Activated T-helper 1 cell treated with anti-CD3 and anti-CD28 coated beads, Interleukin-12 subunit alpha, Interleukin-12 subunit beta, Interleukin-2, Interleukin-4 antibody, amounts not matched to agents 30 ng/mL and 10 ng/mL and 1 ng/mL, durations not matched to agents 14 hours and 24 hours and 36 hours (primary cell): ENCODE measurements at regions of chr19 and their contacts with region 1.

Region 1: GRCh38 chr19:57746580-57747471 is at the start of gene ZNF776:
- DNase-seq: peak; percentile 79
- H3K4me3 Mint-ChIP-seq: peak within 1 kb of the TSS; percentile 90
- H3K27ac Mint-ChIP-seq: peak within 1 kb of the TSS; percentile 93
- H3K4me1 Mint-ChIP-seq: peaks cover 12% of the 10 kb centered on the region
- H3K27me3 Mint-ChIP-seq: peaks cover 2% of the 10 kb centered on the region
- total RNA-seq, gene ZNF776: 6.8 and 6.9 TPM in 2 replicates

Region 2: DNA sequence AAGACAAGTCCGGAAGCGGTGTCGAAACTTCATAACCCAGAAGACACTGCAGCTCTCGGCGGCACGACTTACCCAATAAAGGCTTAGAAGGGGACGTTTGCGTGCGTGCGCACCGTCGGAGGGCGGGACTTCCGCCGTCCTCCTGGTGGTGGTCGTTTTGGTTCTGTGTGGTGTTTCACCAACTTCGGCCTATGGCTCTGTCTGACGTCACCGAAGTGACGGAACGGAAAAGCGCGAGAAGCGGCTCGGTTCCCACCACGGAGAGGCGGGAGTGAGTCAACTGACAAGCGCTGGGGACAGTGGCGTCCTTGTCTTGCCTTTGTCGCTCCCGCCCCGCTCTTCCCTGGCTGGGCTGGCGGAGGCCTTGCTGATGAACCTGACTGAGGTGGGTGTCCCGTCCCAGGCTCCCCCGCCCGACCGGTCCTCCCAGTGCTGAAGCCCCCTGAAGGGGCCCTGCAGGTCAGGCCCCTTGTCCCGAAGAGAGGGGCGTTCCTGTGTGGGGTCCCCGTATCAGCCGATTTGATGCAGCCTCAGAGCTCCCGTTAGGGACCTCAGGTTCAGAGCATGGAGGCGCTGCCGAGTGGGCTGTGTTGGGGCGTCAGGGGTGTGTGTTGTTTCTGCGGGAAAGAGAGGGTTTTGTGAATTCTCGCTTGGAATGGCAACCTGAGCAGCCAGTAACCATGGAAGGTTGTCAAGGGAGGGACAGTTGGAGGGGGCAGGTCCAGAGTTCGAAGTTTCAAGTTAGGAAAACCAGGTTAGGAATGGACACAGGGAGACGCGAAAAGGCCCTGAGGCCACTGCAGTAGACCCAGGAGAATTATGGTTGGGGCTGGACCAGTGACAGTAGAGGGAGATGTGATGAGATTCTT is 356.9 kb before region 1 on chr19 and contains the start of gene ZNF548:
- intact Hi-C with region 1: no loop called
- DNase-seq: peak; percentile 92
- H3K4me3 Mint-ChIP-seq: peak within 1 kb of the TSS; percentile 94
- H3K27ac Mint-ChIP-seq: peak within 1 kb of the TSS; percentile 94
- H3K4me1 Mint-ChIP-seq: peaks cover 30% of the 10 kb centered on the region
- H3K27me3 Mint-ChIP-seq: no peaks in the 10 kb centered on the region
- total RNA-seq, gene ZNF548: 11.3 and 12.1 TPM in 2 replicates

Region 3: DNA sequence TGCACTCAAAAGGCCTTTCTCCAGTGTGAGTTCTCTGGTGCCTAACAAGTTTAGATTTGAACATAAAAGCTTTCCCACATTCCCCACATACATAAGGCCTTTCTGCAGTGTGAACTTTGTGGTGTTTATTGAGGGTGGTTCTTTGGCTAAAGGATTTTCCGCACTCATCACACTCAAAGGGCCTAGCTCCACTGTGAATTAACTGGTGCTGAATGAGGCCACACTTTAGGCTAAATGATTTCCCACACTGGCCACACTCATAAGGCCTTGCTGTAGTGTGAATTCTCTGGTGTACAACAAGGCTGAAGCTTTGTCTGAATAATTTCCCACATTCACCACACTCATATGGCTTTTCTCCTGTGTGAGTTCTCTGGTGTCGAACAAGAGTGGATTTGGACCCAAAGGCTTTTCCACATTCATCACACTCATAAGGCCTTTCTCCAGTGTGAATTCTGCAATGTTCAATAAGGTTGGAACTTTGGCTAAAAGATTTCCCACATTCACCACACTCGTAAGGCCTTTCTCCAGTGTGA is 174.3 kb before region 1 on chr19:
- intact Hi-C with region 1: no loop called
- DNase-seq: no peak
- H3K4me3 Mint-ChIP-seq: no peak overlapping the region
- H3K27ac Mint-ChIP-seq: no peak overlapping the region
- H3K4me1 Mint-ChIP-seq: peaks cover 3% of the 10 kb centered on the region
- H3K27me3 Mint-ChIP-seq: no peaks in the 10 kb centered on the region

Region 4: GRCh38 chr19:57587529-57587928 is 159.3 kb before region 1 on chr19:
- intact Hi-C with region 1: no loop called
- DNase-seq: no peak
- H3K4me3 Mint-ChIP-seq: no peak overlapping the region
- H3K27ac Mint-ChIP-seq: no peak overlapping the region
- H3K4me1 Mint-ChIP-seq: peaks cover 16% of the 10 kb centered on the region
- H3K27me3 Mint-ChIP-seq: no peaks in the 10 kb centered on the region

Region 5: GRCh38 chr19:57613941-57614743 is 132.7 kb before region 1 on chr19 and contains the start of gene ZNF134:
- intact Hi-C with region 1: loop called (anchors 1 kb)
- DNase-seq: peak; percentile 84
- H3K4me3 Mint-ChIP-seq: peak within 1 kb of the TSS; percentile 90
- H3K27ac Mint-ChIP-seq: peak within 1 kb of the TSS; percentile 78
- H3K4me1 Mint-ChIP-seq: peaks cover 11% of the 10 kb centered on the region
- H3K27me3 Mint-ChIP-seq: no peaks in the 10 kb centered on the region
- total RNA-seq, gene ZNF134: 8.4 and 9.4 TPM in 2 replicates

Region 6: GRCh38 chr19:57719901-57720519 is 26.8 kb before region 1 on chr19:
- intact Hi-C with region 1: no loop called
- DNase-seq: no peak
- H3K4me3 Mint-ChIP-seq: no peak overlapping the region
- H3K27ac Mint-ChIP-seq: no peak overlapping the region
- H3K4me1 Mint-ChIP-seq: no peaks in the 10 kb centered on the region
- H3K27me3 Mint-ChIP-seq: no peaks in the 10 kb centered on the region

Region 7: DNA sequence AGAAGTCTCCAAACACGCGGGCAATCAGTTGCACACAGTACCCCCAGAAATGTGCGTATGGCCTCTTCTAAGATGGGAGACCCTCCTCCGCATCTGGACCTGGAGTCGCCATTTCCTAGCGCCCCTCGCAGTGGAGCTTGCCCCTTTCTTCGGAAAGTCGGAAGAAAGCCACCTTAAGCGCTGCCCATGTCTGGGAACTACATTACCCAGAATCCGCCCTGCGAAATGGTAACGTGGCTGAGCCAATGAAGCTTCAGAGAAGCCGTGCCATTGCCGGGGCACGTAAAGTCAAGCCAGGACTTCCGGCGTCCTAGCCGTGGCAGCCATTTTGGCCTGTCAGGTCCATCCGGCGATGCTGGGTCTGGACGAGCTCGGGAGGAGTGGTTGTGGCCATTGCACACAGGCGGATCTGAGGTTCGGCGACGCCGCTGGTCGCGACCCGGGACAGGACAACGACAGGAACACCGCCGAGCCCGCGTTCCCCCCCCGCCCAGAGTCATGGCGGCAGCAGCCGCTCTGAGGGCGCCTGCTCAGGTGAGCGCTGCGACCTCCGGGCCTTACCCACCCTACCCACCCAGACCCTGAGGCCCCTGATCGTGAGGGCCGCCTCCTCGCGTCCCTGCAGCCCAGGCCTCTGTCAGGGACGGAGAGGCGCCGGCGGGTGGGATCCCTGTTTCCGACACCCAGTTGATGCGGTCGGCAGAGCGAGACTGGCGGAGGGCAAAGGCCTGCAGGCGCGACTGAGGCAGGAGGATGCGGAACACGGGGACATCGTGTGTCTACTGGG is 22.7 kb after region 1 on chr19 and contains the start of gene ZNF586:
- intact Hi-C with region 1: loop called (anchors 1 kb)
- DNase-seq: peak; percentile 85
- H3K4me3 Mint-ChIP-seq: peak within 1 kb of the TSS; percentile 94
- H3K27ac Mint-ChIP-seq: peak within 1 kb of the TSS; percentile 89
- H3K4me1 Mint-ChIP-seq: peaks cover 24% of the 10 kb centered on the region
- H3K27me3 Mint-ChIP-seq: no peaks in the 10 kb centered on the region
- total RNA-seq, gene ZNF586: 13.6 and 13.8 TPM in 2 replicates

Region 8: DNA sequence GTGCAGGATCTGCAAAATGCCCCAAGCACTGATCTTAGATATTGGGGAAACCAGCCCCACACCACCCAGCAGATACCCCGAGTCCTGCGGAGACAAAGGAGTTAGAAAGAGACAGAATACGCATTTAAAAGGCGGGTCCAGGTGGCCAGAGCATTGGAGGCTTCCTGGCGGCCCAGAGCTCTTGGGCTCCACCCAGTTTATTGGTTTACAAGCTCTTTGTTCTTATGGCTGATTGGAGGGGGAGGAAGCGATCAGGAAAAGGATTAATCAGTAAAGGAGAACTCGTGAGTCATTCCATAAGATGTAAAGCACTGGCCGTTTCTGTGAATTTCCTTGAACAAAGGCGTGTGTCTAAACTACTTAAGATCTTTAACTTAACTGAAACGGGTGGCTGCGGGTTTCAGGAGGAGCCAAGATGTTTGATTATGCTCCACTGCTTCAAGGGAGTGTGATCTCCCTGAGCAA is 103.8 kb after region 1 on chr19:
- intact Hi-C with region 1: loop called (anchors 1 kb)
- DNase-seq: no peak
- H3K4me3 Mint-ChIP-seq: peak overlapping the region; percentile 92
- H3K27ac Mint-ChIP-seq: peak overlapping the region; percentile 93
- H3K4me1 Mint-ChIP-seq: peaks cover 17% of the 10 kb centered on the region
- H3K27me3 Mint-ChIP-seq: no peaks in the 10 kb centered on the region

Region 9: GRCh38 chr19:58154679-58155648 is 408.1 kb after region 1 on chr19:
- intact Hi-C with region 1: loop called (anchors 1 kb)
- DNase-seq: peak; percentile 89
- H3K4me3 Mint-ChIP-seq: peak overlapping the region; percentile 76
- H3K27ac Mint-ChIP-seq: peak overlapping the region; percentile 55
- H3K4me1 Mint-ChIP-seq: peaks cover 4% of the 10 kb centered on the region
- H3K27me3 Mint-ChIP-seq: no peaks in the 10 kb centered on the region